Activated CD4-positive, alpha-beta memory T cell treated with anti-CD3 and anti-CD28 coated beads for 36 hours (primary cell): ENCODE measurements at regions of chr12 and their contacts with region 1.

Region 1: GRCh38 chr12:7092229-7092985 is at the start of gene C1R:
- DNase-seq: peak; percentile 79
- H3K4me3 Mint-ChIP-seq: peak within 1 kb of the TSS; percentile 76
- H3K27ac Mint-ChIP-seq: no peak within 1 kb of the TSS
- H3K4me1 Mint-ChIP-seq: peaks cover 7% of the 10 kb centered on the region
- H3K27me3 Mint-ChIP-seq: no peaks in the 10 kb centered on the region
- total RNA-seq, gene C1R: 1.4 to 2.2 TPM

Region 2: GRCh38 chr12:6921996-6922946 is 170.1 kb before region 1 on chr12:
- CTCF ChIA-PET with region 1: interaction called, 7 read pairs
- POLR2A ChIA-PET with region 1: no interaction called
- intact Hi-C with region 1: loop called (anchors 5 kb)
- DNase-seq: no peak
- H3K4me3 Mint-ChIP-seq: no peak overlapping the region
- H3K27ac Mint-ChIP-seq: no peak overlapping the region
- H3K4me1 Mint-ChIP-seq: peaks cover 37% of the 10 kb centered on the region
- H3K27me3 Mint-ChIP-seq: no peaks in the 10 kb centered on the region

Region 3: GRCh38 chr12:7042842-7043241 is 49.6 kb before region 1 on chr12:
- CTCF ChIA-PET with region 1: no interaction called
- POLR2A ChIA-PET with region 1: no interaction called
- intact Hi-C with region 1: loop called (anchors 10 kb)
- DNase-seq: no peak
- H3K4me3 Mint-ChIP-seq: no peak overlapping the region
- H3K27ac Mint-ChIP-seq: no peak overlapping the region
- H3K4me1 Mint-ChIP-seq: peaks cover 7% of the 10 kb centered on the region
- H3K27me3 Mint-ChIP-seq: no peaks in the 10 kb centered on the region

Region 4: GRCh38 chr12:7122811-7123769 is 30.7 kb after region 1 on chr12:
- CTCF ChIA-PET with region 1: no interaction called
- POLR2A ChIA-PET with region 1: no interaction called
- intact Hi-C with region 1: no loop called
- DNase-seq: no peak
- H3K4me3 Mint-ChIP-seq: no peak overlapping the region
- H3K27ac Mint-ChIP-seq: no peak overlapping the region
- H3K4me1 Mint-ChIP-seq: no peaks in the 10 kb centered on the region
- H3K27me3 Mint-ChIP-seq: no peaks in the 10 kb centered on the region